ENCODE measurements at regions of chr11 and their contacts with region 1.

Region 1: DNA sequence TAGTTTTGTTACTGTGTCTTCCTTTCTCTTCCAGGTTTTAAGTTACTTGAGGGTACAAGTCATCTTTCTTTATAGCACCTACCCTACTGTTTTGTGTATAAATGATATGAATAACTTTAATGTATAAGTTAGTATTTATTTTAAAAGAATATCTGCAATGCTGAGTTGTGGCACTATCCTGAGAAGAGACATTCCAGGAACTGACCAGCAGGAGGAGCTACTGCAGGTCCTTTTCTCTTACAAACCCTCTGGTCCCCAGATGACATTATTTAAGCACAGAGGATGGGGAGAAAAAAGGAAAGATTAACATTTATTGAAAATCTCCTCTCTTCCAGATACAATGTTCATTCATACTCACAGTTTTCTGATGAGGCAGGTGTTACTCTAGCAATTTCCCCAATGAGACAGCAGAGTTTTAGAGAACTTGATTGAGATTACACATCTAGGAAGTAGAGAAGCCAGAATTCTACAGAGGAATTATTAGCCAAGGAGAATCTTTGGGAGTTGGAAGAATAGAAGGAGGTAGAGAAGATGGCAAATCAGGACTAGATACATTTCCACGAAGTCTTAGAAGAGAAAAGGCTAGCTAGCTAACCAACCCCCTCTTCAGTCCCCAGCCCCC is 541.2 kb upstream of the API5 start:
- DNase-seq: peak in 1 of 2 experiments; percentile 31
- H3K4me3 ChIP-seq: no peak overlapping the region
- H3K4me3 Mint-ChIP-seq: no peak overlapping the region
- H3K27ac Mint-ChIP-seq: no peak overlapping the region
- H3K4me1 ChIP-seq: no peaks in the 10 kb centered on the region
- H3K4me1 Mint-ChIP-seq: no peaks in the 10 kb centered on the region
- H3K27me3 ChIP-seq: no peaks in the 10 kb centered on the region
- H3K27me3 Mint-ChIP-seq: peaks cover 6% of the 10 kb centered on the region
- CTCF ChIP-seq: peak; percentile 73 to 80

Region 2: DNA sequence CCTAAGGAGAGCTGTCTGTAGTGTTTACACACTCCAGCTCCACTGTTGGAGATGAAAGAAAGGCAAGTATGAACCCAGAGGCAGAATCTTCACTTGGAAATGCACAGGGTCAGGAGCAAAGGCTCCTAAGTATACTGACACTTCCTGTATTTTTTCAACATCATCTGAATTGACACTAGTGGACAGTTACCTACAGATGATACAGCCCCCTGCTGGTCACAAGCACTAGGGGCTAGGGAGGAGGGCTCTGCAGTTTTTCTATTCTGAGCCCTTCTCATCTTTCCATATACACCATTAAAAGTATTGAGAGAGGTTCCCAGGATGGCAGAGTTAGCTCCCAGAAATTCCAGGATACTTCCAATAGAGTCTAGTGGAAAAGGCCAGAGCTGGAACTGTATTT is 250.9 kb after region 1 on chr11:
- CTCF ChIA-PET with region 1: no interaction called
- POLR2A ChIA-PET with region 1: no interaction called
- intact Hi-C with region 1: loop called (anchors 1 kb)
- DNase-seq: peak; percentile 39 to 42
- H3K4me3 ChIP-seq: no peak overlapping the region
- H3K4me3 Mint-ChIP-seq: no peak overlapping the region
- H3K27ac Mint-ChIP-seq: no peak overlapping the region
- H3K4me1 ChIP-seq: no peaks in the 10 kb centered on the region
- H3K4me1 Mint-ChIP-seq: no peaks in the 10 kb centered on the region
- H3K27me3 ChIP-seq: no peaks in the 10 kb centered on the region
- H3K27me3 Mint-ChIP-seq: no peaks in the 10 kb centered on the region
- CTCF ChIP-seq: peak; percentile 59 to 62

Measured in Caco-2 (cell line).